BJ (cell line): ENCODE measurements at regions of chr9 and their contacts with region 1.

Region 1: DNA sequence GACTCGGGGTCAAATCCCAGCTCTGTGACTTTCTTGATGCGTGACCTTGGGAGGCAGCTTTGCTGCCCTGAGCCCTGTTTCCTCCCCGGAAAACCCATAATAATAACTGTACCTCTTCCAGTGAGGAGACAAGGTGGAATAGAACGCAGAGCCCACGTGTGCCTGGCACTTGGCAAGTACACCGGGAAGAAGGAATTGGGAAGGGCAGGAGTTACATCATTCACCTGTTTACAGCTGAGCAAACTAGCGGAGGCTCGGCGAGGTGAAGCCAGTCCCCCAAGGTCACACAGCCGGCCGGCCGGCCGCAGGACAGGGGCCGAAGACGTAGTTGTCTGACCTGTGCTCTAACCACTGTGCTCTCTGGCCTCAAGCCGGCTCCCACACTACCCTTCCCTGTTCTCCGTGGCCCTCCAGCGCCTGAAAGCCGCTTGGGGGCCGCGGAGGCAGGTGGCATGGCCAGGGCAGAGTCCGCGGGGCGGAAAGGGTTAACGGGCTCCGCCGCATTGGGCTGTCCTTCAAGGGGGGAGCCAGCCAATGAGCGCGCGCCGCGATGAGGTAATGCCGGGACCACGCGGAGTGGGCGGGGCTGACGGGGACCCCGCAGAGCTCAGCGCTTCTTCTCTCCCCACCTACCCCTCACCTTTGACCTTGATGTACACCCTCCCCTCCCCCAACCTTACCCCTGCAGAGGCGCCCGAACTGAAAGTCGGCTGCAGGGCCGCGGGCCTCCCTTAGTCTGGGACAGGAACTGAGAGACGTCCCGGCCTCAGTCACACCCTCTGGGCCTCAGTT is 125.2 kb downstream of the C9orf50 start:
- DNase-seq: no peak
- H3K4me3 ChIP-seq: peak overlapping the region; percentile 82
- H3K27me3 ChIP-seq: no peaks in the 10 kb centered on the region
- CTCF ChIP-seq: no peak

Region 2: GRCh38 chr9:129333953-129334724 is 161.6 kb before region 1 on chr9:
- CTCF ChIA-PET with region 1: interaction called, 3 read pairs
- POLR2A ChIA-PET with region 1: interaction called, 10 read pairs
- DNase-seq: peak; percentile 83
- H3K4me3 ChIP-seq: no peak overlapping the region
- H3K27me3 ChIP-seq: no peaks in the 10 kb centered on the region
- CTCF ChIP-seq: no peak; the same call in 1 of the 2 replicates

Region 3: DNA sequence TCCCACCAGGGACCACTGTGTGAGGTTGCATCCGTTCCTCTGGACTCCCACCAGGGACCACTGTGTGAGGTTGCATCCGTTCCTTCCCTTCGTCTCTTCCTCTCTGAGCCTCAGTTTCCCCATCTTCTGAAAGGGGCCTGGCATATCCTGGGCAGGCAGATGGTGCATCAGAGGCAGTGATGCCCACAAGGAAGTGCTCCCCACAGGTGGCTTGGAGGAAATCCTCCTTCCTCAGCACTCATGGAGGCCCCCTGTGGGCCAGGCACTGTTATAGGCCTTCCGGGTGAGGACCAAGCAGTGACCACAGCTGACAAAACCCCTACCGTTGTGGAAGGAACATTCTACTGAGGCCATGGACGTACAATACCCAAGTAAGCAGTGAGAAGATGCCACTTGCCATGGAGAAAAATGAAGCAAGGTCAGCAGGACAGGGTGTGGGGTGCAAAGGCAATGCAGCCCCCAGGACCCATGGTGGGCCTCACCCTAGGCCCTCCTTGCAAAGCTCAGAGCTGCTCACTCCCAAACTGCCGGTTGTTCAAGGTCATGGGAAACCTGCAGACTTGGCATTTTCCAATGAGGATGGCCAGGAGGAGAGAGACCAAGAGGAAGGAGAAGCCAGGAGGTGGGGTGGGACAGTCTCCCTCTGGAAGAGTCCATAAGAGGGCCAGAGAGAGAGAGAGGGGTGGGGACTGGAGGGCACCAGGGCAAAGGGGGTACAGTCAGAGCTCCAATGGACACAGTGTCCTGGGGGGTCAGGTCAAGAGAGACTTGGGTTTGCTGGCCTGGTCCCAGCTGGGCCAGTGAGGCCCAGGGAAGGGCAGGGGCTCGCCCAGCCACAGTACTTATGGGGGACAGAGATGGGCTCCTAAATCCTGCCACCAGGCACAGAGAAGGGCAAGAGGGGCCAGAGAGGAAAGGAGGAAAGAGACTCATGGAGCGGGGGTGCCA is 74.0 kb after region 1 on chr9:
- CTCF ChIA-PET with region 1: interaction called, 18 read pairs
- POLR2A ChIA-PET with region 1: interaction called, 12 read pairs
- DNase-seq: no peak
- H3K4me3 ChIP-seq: no peak overlapping the region
- H3K27me3 ChIP-seq: no peaks in the 10 kb centered on the region
- CTCF ChIP-seq: peak; percentile 47

Region 4: GRCh38 chr9:129610473-129611301 is 115.0 kb after region 1 on chr9:
- CTCF ChIA-PET with region 1: interaction called, 11 read pairs
- POLR2A ChIA-PET with region 1: interaction called, 3 read pairs
- DNase-seq: no peak
- H3K4me3 ChIP-seq: peak overlapping the region; percentile 51
- H3K27me3 ChIP-seq: no peaks in the 10 kb centered on the region
- CTCF ChIP-seq: peak; percentile 90

Region 5: DNA sequence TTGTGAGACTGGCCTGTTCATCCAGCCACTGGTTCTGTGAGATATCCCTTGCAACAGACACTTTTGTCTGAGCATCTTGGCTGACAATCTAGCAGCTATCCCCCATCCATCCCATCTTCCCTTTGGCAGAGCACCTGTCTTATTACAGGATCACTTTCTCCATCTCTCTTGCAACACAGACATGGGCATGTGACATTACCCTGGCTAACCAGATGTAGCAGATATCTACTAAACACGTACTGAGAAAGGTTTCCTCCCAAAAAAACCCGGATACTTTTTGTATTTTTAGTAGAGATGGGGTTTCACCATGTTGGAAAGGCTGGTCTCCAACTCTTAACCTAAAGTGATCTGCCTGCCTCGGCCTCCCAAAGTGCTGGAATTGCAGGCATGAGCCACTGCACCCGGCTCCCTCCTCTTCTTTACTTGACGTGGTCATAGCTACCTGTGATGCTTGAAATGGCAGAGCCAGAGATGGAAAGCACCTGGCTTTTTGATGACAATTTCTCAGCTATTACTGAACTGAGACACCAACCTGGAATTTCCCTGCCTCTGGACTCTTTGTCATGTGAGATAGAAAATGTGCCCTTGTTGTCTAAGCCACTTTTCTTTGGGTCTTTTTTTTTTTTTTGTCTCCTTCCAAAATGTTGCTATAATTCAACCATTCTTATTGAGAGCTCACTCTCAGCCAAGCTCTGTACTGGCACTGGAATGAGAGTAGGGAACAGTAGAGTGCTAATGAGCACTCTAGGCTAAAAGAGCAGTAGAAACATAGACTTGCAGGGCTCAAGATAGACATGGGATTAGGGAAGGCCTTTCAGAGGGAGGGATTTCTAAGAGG is 514.6 kb after region 1 on chr9:
- CTCF ChIA-PET with region 1: no interaction called
- POLR2A ChIA-PET with region 1: no interaction called
- DNase-seq: no peak
- H3K4me3 ChIP-seq: no peak overlapping the region
- H3K27me3 ChIP-seq: no peaks in the 10 kb centered on the region
- CTCF ChIP-seq: no peak